ENCODE measurements at regions of chr10 and their contacts with region 1.

Region 1: GRCh38 chr10:7488418-7488829 is 77.6 kb upstream of the SFMBT2 start:
- DNase-seq: no peak
- ATAC-seq: no peak
- H3K4me3 ChIP-seq: no peak overlapping the region
- H3K27ac ChIP-seq: no peak overlapping the region
- H3K4me1 ChIP-seq: no peaks in the 10 kb centered on the region
- H3K27me3 ChIP-seq: peaks cover 4% of the 10 kb centered on the region
- CTCF ChIP-seq: no peak

Region 2: GRCh38 chr10:7218968-7219367 is 269.5 kb before region 1 on chr10:
- CTCF ChIA-PET with region 1: no interaction called
- POLR2A ChIA-PET with region 1: no interaction called
- in situ Hi-C with region 1: no loop called
- intact Hi-C with region 1: no loop called
- DNase-seq: peak; percentile 17
- ATAC-seq: no peak
- H3K4me3 ChIP-seq: no peak overlapping the region
- H3K27ac ChIP-seq: no peak overlapping the region
- H3K4me1 ChIP-seq: no peaks in the 10 kb centered on the region
- H3K27me3 ChIP-seq: no peaks in the 10 kb centered on the region
- CTCF ChIP-seq: peak; percentile 5; the same call in 1 of the 2 replicates

Region 3: DNA sequence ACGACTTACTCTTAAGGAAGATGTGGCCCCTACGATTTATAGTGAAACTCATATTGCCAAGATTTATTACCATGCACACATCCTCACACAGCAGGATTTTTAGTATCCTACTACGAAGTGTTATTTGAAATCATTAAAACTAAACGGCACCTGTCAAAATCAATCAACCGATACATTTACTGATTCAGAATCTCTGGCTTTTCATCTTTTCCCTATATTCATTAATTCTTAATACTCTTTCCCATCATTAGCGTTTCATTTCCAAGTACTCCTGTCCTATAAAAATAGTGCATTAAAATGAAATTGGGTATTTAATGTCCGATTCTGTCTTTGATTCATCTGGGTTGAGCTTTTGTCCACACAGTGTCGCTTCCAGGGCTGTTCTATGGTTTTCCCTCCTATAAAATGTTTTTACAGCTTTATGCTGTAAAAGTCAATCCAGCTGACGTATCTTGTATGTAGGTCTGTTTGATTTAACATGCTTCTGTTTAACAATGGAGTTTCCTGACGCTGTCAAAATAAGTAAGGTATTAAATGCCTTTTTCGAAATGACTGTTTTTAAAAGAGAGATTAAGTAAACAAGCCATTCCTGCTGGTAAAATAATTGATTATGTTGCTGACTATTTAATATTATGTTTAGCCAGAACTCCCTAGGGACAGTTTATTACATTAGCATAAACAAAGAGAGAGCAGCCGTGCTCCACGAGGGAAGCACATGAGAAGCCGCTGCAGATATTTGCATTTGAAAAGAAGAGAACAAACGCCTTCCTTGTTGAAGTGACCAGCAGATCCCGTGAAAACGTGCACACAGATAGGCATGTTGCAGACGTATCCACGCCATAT is 55.3 kb before region 1 on chr10:
- CTCF ChIA-PET with region 1: no interaction called
- POLR2A ChIA-PET with region 1: no interaction called
- in situ Hi-C with region 1: no loop called
- intact Hi-C with region 1: no loop called
- DNase-seq: no peak
- ATAC-seq: no peak
- H3K4me3 ChIP-seq: no peak overlapping the region
- H3K27ac ChIP-seq: no peak overlapping the region
- H3K4me1 ChIP-seq: no peaks in the 10 kb centered on the region
- H3K27me3 ChIP-seq: no peaks in the 10 kb centered on the region; the same call in 1 of the 2 replicates
- CTCF ChIP-seq: no peak

Region 4: GRCh38 chr10:7475046-7475911 is 13.1 kb before region 1 on chr10:
- CTCF ChIA-PET with region 1: no interaction called
- POLR2A ChIA-PET with region 1: interaction called, 15 read pairs
- in situ Hi-C with region 1: no loop called
- intact Hi-C with region 1: no loop called
- DNase-seq: no peak
- ATAC-seq: no peak
- H3K4me3 ChIP-seq: no peak overlapping the region
- H3K27ac ChIP-seq: no peak overlapping the region
- H3K4me1 ChIP-seq: no peaks in the 10 kb centered on the region
- H3K27me3 ChIP-seq: 0 out of 2 replicates have a peak, but pooled peaks cover 3% of the 10 kb centered on the region
- CTCF ChIP-seq: no peak

Region 5: DNA sequence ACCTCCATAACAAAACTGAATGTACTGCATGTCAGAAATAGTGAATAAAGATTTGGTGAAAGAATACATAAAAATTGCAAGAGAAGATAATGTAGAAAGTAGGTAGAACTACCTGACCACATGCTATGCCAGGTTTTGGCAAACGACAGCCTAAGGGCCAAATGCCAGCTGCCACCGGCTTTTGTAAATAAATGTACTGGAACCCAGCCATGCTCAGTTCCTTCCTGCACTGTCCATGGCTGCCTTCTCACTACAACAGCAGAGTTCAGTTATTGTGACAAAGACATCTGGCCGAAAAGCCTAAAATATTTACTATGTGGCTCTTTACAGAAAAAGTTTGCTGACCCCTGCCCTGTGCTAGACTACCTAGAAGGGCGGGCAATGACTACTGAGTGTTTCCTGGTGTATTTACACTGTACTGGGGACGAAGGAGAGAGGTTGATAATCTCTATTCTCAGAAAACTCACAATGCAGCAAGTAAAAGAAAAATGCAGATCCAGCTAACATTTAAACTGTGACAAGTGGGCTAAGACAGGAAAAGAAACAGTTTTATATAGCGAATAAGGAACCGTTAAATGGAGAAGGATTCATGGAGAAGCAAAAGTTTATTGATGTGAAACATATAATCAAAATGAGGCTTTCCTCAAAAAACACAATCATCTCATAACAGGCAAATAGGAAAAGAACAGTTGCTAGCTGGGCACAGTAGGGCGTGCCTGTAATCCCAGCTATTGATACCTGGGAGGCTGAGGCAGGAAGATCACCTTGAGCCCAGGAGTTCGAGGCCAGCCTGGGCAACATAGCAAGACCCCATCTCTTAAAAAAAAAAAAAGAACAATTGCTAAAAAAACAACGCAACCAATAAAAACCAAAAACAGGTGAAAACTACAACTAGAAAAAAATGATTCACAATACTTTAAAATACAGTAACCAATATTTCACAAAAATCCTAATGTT is 285.7 kb after region 1 on chr10:
- CTCF ChIA-PET with region 1: no interaction called
- POLR2A ChIA-PET with region 1: no interaction called
- in situ Hi-C with region 1: no loop called
- intact Hi-C with region 1: no loop called
- DNase-seq: no peak
- ATAC-seq: no peak
- H3K4me3 ChIP-seq: no peak overlapping the region
- H3K27ac ChIP-seq: no peak overlapping the region
- H3K4me1 ChIP-seq: no peaks in the 10 kb centered on the region
- H3K27me3 ChIP-seq: no peaks in the 10 kb centered on the region
- CTCF ChIP-seq: no peak